Esophagus muscularis mucosa (tissue), 4 donors: ENCODE measurements at regions of chr11 and their contacts with region 1.

Region 1: DNA sequence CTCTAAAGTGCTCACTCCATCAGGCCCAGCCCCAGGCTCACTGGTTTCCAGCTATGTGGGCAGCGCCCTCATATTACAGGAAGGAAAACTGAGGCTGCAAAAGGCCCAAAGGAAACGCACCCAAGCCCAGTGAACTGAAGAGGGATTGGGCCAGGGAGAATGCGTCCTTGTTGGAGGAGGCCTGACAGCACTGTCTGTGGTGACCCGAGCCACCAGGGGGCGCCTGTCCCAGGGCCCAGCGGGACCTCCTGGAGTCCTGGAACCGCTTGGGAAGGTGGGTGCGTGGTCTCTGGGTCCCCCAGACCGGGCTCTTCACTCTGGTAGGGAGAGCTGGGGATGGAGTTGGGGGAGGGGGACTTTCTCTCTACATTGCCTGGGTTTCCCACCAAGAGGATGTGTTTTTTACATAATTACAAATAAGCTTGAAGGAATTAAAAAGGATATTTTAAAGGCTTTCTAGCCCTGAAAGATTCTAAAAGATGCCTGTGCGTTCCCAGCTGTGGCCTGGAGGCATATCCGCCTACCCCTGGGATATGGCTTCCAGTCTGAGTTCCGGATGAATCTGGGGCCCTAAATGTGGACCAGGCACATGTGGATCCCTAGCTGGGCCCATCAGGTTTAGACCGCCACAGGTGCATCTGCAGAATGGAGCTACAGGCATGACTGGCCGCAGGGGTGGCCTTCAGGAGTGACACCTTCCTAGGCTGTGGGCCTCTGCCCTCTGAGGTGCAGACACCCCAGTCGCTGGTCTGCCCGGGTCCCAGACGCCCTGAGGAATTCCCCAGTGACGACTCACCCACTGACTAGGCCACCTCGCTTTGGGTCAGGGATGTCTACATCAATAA is 4.2 kb downstream of the SPI1 start:
- DNase-seq: no peak
- H3K4me3 ChIP-seq: no peak overlapping the region
- H3K27ac ChIP-seq: peak overlapping the region in 2 of 4 donors; percentile 5
- H3K4me1 ChIP-seq: peaks cover 0 to 8% (median 3%) of the 10 kb centered on the region in 4 donors
- H3K27me3 ChIP-seq: no peaks in the 10 kb centered on the region
- CTCF ChIP-seq: peak in 2 of 3 experiments; percentile 88 to 90
- EP300 ChIP-seq: no peak
- POLR2A ChIP-seq: no peak

Region 2: GRCh38 chr11:47161881-47162280 is 212.2 kb before region 1 on chr11:
- intact Hi-C with region 1: no loop called
- DNase-seq: no peak
- H3K4me3 ChIP-seq: no peak overlapping the region
- H3K27ac ChIP-seq: peak overlapping the region in 3 of 4 donors; percentile 11 to 33 (median 19)
- H3K4me1 ChIP-seq: peaks cover 12 to 26% (median 23%) of the 10 kb centered on the region in 4 donors
- H3K27me3 ChIP-seq: no peaks in the 10 kb centered on the region
- CTCF ChIP-seq: no peak
- EP300 ChIP-seq: no peak
- POLR2A ChIP-seq: no peak

Region 3: GRCh38 chr11:47407746-47408590 is 33.9 kb after region 1 on chr11 and contains the start of gene SLC39A13:
- intact Hi-C with region 1: loop called (anchors 5 kb)
- DNase-seq: peak; percentile 97
- H3K4me3 ChIP-seq: peak within 1 kb of the TSS; percentile 82 to 94 (median 88)
- H3K27ac ChIP-seq: peak within 1 kb of the TSS; percentile 96 to 98 (median 98)
- H3K4me1 ChIP-seq: peaks cover 25 to 54% (median 51%) of the 10 kb centered on the region in 4 donors
- H3K27me3 ChIP-seq: no peaks in the 10 kb centered on the region
- CTCF ChIP-seq: peak; percentile 88 to 94 (median 91)
- EP300 ChIP-seq: no peak
- POLR2A ChIP-seq: peak; percentile 93
- total RNA-seq, gene SLC39A13: 91.9 to 251 (median 129) TPM

Region 4: GRCh38 chr11:47454180-47454644 is 80.1 kb after region 1 on chr11:
- intact Hi-C with region 1: loop called (anchors 1 kb)
- DNase-seq: no peak
- H3K4me3 ChIP-seq: no peak overlapping the region
- H3K27ac ChIP-seq: no peak overlapping the region
- H3K4me1 ChIP-seq: peaks cover 0 to 5% (median under 1%) of the 10 kb centered on the region in 4 donors
- H3K27me3 ChIP-seq: no peaks in the 10 kb centered on the region
- CTCF ChIP-seq: peak; percentile 72 to 83 (median 76)
- EP300 ChIP-seq: no peak
- POLR2A ChIP-seq: no peak

Region 5: GRCh38 chr11:47611348-47611794 is 237.3 kb after region 1 on chr11:
- intact Hi-C with region 1: no loop called
- DNase-seq: no peak
- H3K4me3 ChIP-seq: no peak overlapping the region
- H3K27ac ChIP-seq: no peak overlapping the region
- H3K4me1 ChIP-seq: peaks cover 0 to 20% (median 3%) of the 10 kb centered on the region in 4 donors
- H3K27me3 ChIP-seq: no peaks in the 10 kb centered on the region
- CTCF ChIP-seq: no peak
- EP300 ChIP-seq: no peak
- POLR2A ChIP-seq: no peak